Activated CD4-positive, alpha-beta memory T cell treated with anti-CD3 and anti-CD28 coated beads, Interleukin-2, amount 10 ng/mL, durations not matched to agents 7 days and 5 days (primary cell): ENCODE measurements at regions of chr5 and their contacts with region 1.

Region 1: DNA sequence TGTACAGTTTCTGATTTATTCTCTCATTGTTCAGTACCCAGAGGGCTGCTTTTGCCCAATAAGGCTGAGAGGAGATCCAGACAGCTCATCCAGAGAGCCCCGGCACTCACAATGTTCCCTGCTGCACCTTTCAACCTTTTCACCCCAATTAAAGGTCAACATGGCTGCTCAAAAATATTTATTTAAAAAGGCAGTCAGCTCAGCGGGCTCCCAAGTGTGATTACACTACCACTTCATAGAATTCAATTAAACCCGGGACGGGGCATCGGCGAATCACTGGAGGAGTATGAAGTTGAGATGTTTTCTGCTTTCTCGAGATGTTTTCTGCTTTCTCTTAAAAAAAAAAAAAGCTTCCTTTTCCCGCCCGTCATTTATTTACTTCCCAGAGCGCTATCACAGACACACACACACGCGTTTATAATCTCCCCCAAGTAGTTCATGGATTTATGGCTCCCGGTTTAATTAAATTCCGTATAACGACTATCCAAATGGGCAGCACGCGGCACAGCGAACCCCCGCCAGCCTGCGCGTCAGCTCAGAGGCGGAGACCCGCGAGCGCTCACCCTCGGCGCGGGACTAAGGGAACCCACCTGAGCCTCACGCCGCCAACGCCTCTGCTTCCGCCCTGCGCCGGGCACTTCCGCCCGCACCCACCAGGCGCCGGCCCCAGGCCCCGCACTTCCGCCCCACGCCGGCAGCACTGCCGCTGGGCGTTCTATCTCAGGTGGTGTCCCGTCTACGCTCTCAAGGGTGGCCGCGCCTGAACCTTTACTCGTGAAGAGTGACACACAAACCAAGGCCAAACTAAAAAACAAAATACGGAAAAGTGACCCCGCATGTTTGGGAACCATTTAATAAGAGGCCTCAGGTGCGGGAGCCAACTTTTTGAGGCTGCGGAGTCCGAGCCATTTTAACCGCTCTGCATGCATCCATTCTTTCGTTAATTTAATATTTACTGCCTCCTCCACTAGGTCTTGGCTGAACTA is at the start of gene C5orf63:
- DNase-seq: peak; percentile 76
- H3K4me3 Mint-ChIP-seq: peak within 1 kb of the TSS; percentile 82
- H3K27ac Mint-ChIP-seq: peak within 1 kb of the TSS; percentile 67
- H3K4me1 Mint-ChIP-seq: peaks cover 13% of the 10 kb centered on the region
- H3K27me3 Mint-ChIP-seq: no peaks in the 10 kb centered on the region
- total RNA-seq, gene C5orf63: 6.6 to 7.1 TPM

Region 2: GRCh38 chr5:127084656-127085055 is 11.5 kb after region 1 on chr5:
- CTCF ChIA-PET with region 1: no interaction called
- POLR2A ChIA-PET with region 1: interaction called, 10 read pairs
- DNase-seq: no peak
- H3K4me3 Mint-ChIP-seq: no peak overlapping the region
- H3K27ac Mint-ChIP-seq: no peak overlapping the region
- H3K4me1 Mint-ChIP-seq: no peaks in the 10 kb centered on the region
- H3K27me3 Mint-ChIP-seq: peaks cover 3% of the 10 kb centered on the region